ENCODE measurements at regions of chr5 and their contacts with region 1.

Region 1: GRCh38 chr5:117454716-117455596 is 880.3 kb upstream of the SEMA6A start:
- DNase-seq: peak; percentile 30
- ATAC-seq: peak; percentile 81
- H3K4me3 Mint-ChIP-seq: peak overlapping the region; percentile 59
- H3K27ac Mint-ChIP-seq: no peak overlapping the region
- H3K4me1 Mint-ChIP-seq: peaks cover 7% of the 10 kb centered on the region
- H3K27me3 Mint-ChIP-seq: peaks cover 4% of the 10 kb centered on the region
- CTCF ChIP-seq: peak; percentile 50

Region 2: GRCh38 chr5:118611332-118611945 is 1156.5 kb after region 1 on chr5:
- CTCF ChIA-PET with region 1: interaction called, 7 read pairs
- POLR2A ChIA-PET with region 1: no interaction called
- intact Hi-C with region 1: loop called (anchors 1 kb)
- DNase-seq: no peak
- ATAC-seq: no peak
- H3K4me3 Mint-ChIP-seq: no peak overlapping the region
- H3K27ac Mint-ChIP-seq: no peak overlapping the region
- H3K4me1 Mint-ChIP-seq: no peaks in the 10 kb centered on the region
- H3K27me3 Mint-ChIP-seq: peaks cover 8% of the 10 kb centered on the region
- CTCF ChIP-seq: no peak

Region 3: DNA sequence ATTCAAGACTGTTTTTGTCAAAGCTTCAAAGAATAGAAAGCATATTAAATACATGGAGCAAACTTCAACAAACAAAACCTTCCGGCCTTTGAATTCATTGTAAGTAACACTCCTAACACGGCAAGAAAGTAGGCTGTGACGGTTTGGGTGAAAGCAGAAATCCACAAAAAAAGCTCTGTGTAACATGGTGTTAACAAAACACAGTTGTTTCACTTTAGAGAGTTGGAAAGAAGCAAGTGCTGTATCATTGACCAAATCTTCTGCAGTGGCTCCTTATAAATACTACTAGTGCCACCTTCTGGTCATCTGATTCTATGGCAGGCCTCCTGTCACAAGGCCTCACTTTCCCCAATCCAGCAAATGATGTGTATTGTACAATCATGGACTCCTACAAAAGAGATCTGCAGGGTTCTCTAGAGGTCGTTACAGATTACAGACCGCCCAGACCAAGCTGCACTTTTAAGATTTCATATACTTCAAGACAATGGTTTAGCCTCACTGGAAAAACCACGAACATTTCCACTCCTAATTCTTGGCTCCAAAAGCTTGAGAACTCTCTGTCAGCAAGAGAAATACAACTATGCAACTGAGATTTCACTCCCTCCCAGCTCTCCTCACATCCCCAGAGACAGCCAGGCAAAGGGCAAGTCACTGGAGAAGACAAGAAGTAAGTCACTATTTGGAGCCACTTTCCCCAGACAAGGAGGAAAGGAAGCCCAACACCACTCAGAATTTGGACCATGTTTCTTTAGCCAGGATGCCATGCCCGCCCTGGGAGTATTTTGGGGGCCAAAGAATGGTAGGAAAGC is 1337.2 kb after region 1 on chr5:
- CTCF ChIA-PET with region 1: interaction called, 11 read pairs
- POLR2A ChIA-PET with region 1: no interaction called
- intact Hi-C with region 1: loop called (anchors 1 kb)
- DNase-seq: no peak
- ATAC-seq: peak; percentile 47
- H3K4me3 Mint-ChIP-seq: no peak overlapping the region
- H3K27ac Mint-ChIP-seq: no peak overlapping the region
- H3K4me1 Mint-ChIP-seq: no peaks in the 10 kb centered on the region
- H3K27me3 Mint-ChIP-seq: peaks cover 3% of the 10 kb centered on the region
- CTCF ChIP-seq: no peak

Measured in activated B cell treated with CpG ODN at 0.5 μM for 24 hours (primary cell).